Uterus (tissue), 4 donors: ENCODE measurements at regions of chr10 and their contacts with region 1.

Region 1: DNA sequence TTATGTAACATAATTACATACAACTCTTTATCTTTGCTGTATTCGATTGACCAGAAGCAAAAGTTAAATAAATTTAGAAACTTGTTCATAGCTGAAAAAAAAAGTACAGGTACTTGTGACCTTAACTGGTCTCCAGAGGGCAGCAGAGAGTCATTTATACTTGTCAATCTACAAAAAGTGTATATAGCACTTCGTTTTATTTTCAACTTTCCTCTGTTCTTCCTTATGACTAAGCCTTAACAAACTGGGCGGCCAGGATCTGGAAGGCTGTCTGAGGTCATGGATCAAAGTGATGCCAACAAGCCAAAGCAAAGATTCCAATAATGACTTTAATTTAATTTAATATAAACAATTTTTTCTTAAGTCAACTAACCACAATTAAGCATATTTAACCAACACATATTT is 29.8 kb downstream of the C10orf67 start:
- DNase-seq: peak in 1 of 2 donors; percentile 47
- H3K4me3 ChIP-seq: no peak overlapping the region
- H3K27ac ChIP-seq: no peak overlapping the region
- H3K4me1 ChIP-seq: no peaks in the 10 kb centered on the region
- H3K27me3 ChIP-seq: no peaks in the 10 kb centered on the region
- CTCF ChIP-seq: peak; percentile 60 to 71 (median 69)
- POLR2A ChIP-seq: no peak

Region 2: DNA sequence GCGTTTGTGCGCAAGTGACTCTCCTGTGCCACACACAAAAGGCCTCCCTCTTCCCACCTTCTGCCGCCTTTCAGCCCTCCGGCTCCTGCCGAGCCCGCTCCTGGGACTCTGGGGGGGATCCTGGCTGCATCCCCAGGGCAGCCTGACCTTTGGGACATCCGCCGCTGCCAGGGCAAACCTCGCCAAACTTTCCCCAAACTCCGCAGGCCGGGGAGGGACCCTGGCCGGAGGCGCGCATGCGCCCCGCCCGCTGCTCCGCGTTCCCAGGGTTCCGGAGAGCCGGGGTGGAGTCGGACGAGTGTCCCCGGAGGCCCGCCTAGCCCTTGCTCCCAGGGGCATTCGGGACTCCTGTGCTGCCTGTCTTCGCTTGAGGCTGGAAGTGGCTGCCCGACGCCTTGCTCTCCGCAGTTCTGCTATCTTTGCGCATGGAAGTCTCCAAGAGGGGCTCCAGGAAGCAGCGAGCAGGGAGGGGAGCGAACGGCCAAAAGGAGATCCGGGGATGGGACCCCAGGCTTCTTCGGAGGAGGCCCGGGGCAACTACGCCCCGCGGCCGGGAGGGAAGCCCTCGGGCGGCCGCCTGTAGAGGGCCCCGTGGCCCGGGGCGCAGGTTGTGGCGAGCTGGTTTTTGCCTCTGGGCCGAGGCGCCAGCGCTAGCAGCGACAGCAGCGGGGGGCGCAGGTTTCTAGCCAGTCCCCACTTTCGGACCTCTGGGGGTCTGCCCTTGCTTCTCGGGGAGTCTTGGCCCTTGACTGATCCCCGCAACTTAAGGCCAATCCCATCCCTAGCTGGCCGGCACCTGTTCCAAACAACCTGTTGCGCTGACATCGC is 115.7 kb before region 1 on chr10:
- intact Hi-C with region 1: no loop called
- DNase-seq: no peak
- H3K4me3 ChIP-seq: no peak overlapping the region
- H3K27ac ChIP-seq: no peak overlapping the region
- H3K4me1 ChIP-seq: no peaks in the 10 kb centered on the region
- H3K27me3 ChIP-seq: peaks cover 0 to 21% of the 10 kb centered on the region in 2 donors
- CTCF ChIP-seq: no peak
- POLR2A ChIP-seq: no peak

Region 3: DNA sequence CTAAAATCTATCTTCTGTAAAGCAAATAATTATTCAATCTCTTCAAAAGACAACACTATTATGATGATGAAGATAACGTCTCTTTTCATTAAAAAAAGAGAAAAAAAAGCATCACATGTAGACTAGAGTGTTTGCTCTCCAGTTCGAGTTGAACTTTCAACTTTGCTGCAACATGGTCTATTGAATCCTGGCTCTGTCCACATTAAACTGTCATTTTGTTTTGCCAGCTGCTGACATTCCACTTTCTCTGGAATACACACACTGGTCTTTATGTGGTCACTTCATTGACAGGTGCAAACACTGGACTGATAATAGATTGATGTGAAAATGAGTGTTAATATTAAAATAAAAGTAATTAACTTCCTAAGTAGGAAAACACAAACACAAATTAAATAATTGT is 61.1 kb before region 1 on chr10:
- intact Hi-C with region 1: no loop called
- DNase-seq: no peak
- H3K4me3 ChIP-seq: no peak overlapping the region
- H3K27ac ChIP-seq: no peak overlapping the region
- H3K4me1 ChIP-seq: no peaks in the 10 kb centered on the region
- H3K27me3 ChIP-seq: no peaks in the 10 kb centered on the region
- CTCF ChIP-seq: no peak
- POLR2A ChIP-seq: no peak

Region 4: GRCh38 chr10:23525406-23525805 is 210.6 kb after region 1 on chr10:
- intact Hi-C with region 1: loop called (anchors 10 kb)
- DNase-seq: no peak
- H3K4me3 ChIP-seq: no peak overlapping the region
- H3K27ac ChIP-seq: no peak overlapping the region
- H3K4me1 ChIP-seq: no peaks in the 10 kb centered on the region
- H3K27me3 ChIP-seq: no peaks in the 10 kb centered on the region
- CTCF ChIP-seq: peak in 2 of 4 experiments; percentile 17 to 23
- POLR2A ChIP-seq: no peak